ENCODE measurements at regions of chrX and their contacts with region 1.

Region 1: DNA sequence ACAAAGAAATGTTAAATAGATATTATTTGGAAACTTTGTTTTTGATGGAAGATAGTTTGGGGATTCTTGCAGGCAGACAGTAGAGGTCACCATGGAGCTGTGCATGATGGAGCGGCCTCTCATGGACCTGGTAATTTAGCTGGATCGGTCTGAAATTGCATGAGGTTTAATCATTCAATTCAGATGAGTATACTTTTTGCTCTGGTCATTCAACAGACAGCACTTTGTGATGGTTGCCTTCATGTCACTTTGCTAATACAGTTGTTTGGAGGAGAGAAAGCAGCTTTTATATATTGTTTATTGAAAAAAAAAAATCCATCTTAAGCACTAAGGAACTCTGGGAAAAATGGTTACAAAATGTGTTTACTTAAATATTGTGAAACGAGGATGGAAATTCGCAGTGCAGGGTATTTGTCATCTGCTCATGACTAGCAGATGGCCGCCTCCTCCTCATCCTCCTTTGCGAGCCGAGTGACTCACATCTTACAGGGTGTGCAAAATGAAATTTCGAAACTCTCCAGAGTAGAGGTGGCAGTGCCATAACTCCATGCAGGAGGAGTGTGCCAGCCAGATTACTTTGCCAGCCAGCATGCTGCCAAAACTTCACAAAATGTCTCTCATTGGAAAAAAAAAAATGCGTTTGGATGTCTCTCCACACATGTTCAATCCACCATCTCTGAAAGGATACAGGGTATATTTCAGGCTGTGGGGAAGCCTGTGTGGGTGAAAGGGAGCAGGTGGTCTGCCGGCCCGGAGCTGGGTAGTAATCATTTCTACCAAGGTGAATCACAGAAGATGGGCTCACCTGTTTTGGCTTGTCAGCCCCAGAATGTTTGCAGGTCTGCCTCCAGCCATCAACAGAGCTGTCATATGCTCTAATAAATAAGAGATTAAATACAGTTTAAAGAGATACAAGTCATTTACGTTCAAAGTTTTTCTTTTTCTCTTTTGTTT is 314.9 kb upstream of the DIPK2B start:
- DNase-seq: peak; percentile 71 to 77
- ATAC-seq: peak; percentile 96 to 98
- H3K4me3 ChIP-seq: peak overlapping the region in 1 of 4 donors; percentile 12
- H3K27ac ChIP-seq: peak overlapping the region; percentile 48 to 67 (median 64)
- H3K4me1 ChIP-seq: peaks cover 0 to 20% of the 10 kb centered on the region in 2 donors
- H3K27me3 ChIP-seq: peaks cover 0 to 5% (median 0%) of the 10 kb centered on the region in 3 donors
- CTCF ChIP-seq: peak in 4 of 5 experiments; percentile 23 to 54 (median 50)
- POLR2A ChIP-seq: peak in 1 of 2 donors; percentile 45

Region 2: GRCh38 chrX:44872817-44873414 is 642.6 kb before region 1 on chrX and contains the start of gene KDM6A:
- in situ Hi-C with region 1: no loop called
- intact Hi-C with region 1: loop called (anchors 10 kb)
- DNase-seq: peak; percentile 91 to 95
- ATAC-seq: peak; percentile 84 to 86
- H3K4me3 ChIP-seq: peak within 1 kb of the TSS; percentile 74 to 83 (median 77)
- H3K27ac ChIP-seq: peak within 1 kb of the TSS; percentile 94 to 100 (median 98)
- H3K4me1 ChIP-seq: peaks cover 13 to 42% of the 10 kb centered on the region in 2 donors
- H3K27me3 ChIP-seq: no peaks in the 10 kb centered on the region
- CTCF ChIP-seq: no peak
- POLR2A ChIP-seq: peak; percentile 90 to 96
- total RNA-seq, gene KDM6A: 14.3 to 29.2 (median 20.1) TPM

Region 3: GRCh38 chrX:45351478-45351877 is 164.1 kb before region 1 on chrX:
- in situ Hi-C with region 1: no loop called
- intact Hi-C with region 1: no loop called
- DNase-seq: no peak
- ATAC-seq: no peak
- H3K4me3 ChIP-seq: no peak overlapping the region
- H3K27ac ChIP-seq: no peak overlapping the region
- H3K4me1 ChIP-seq: no peaks in the 10 kb centered on the region
- H3K27me3 ChIP-seq: no peaks in the 10 kb centered on the region
- CTCF ChIP-seq: no peak
- POLR2A ChIP-seq: no peak

Region 4: GRCh38 chrX:45557390-45557789 is 41.9 kb after region 1 on chrX:
- in situ Hi-C with region 1: no loop called
- intact Hi-C with region 1: loop called (anchors 2 kb)
- DNase-seq: no peak
- ATAC-seq: no peak
- H3K4me3 ChIP-seq: no peak overlapping the region
- H3K27ac ChIP-seq: no peak overlapping the region
- H3K4me1 ChIP-seq: no peaks in the 10 kb centered on the region
- H3K27me3 ChIP-seq: no peaks in the 10 kb centered on the region
- CTCF ChIP-seq: peak in 2 of 5 experiments; percentile 9 to 28
- POLR2A ChIP-seq: no peak

Region 5: GRCh38 chrX:45769761-45770582 is 254.4 kb after region 1 on chrX:
- in situ Hi-C with region 1: loop called in 2 of 4 experiments (anchors 25 kb)
- intact Hi-C with region 1: no loop called
- DNase-seq: peak; percentile 14 to 54
- ATAC-seq: peak; percentile 77 to 82
- H3K4me3 ChIP-seq: peak overlapping the region; percentile 35 to 48 (median 44)
- H3K27ac ChIP-seq: peak overlapping the region; percentile 64 to 74 (median 72)
- H3K4me1 ChIP-seq: no peaks in the 10 kb centered on the region
- H3K27me3 ChIP-seq: peaks cover 0 to 28% (median 12%) of the 10 kb centered on the region in 3 donors
- CTCF ChIP-seq: no peak
- POLR2A ChIP-seq: peak; percentile 32 to 57

Region 6: GRCh38 chrX:46408553-46409407 is 893.2 kb after region 1 on chrX:
- in situ Hi-C with region 1: loop called in 1 of 4 experiments (anchors 25 kb)
- intact Hi-C with region 1: no loop called
- DNase-seq: peak in 1 of 2 donors; percentile 24
- ATAC-seq: no peak
- H3K4me3 ChIP-seq: no peak overlapping the region
- H3K27ac ChIP-seq: no peak overlapping the region
- H3K4me1 ChIP-seq: no peaks in the 10 kb centered on the region
- H3K27me3 ChIP-seq: no peaks in the 10 kb centered on the region
- CTCF ChIP-seq: peak; percentile 46 to 84 (median 64)
- POLR2A ChIP-seq: no peak

Measured in gastrocnemius medialis (tissue), 4 donors.